PC-9 (cell line): ENCODE measurements at regions of chr7 and their contacts with region 1.

Region 1: GRCh38 chr7:44811086-44811485 is 14.6 kb downstream of the PPIA start:
- DNase-seq: peak in 1 of 2 experiments; percentile 84
- H3K4me3 ChIP-seq: no peak overlapping the region
- H3K27ac ChIP-seq: peak overlapping the region; percentile 2; the same call in 1 of the 2 replicates
- H3K4me1 ChIP-seq: peaks cover 16% of the 10 kb centered on the region
- H3K27me3 ChIP-seq: no peaks in the 10 kb centered on the region
- CTCF ChIP-seq: no peak

Region 2: GRCh38 chr7:44824894-44825526 is 13.9 kb after region 1 on chr7:
- CTCF ChIA-PET with region 1: no interaction called
- POLR2A ChIA-PET with region 1: interaction called, 19 read pairs
- intact Hi-C with region 1: no loop called
- DNase-seq: no peak
- H3K4me3 ChIP-seq: no peak overlapping the region
- H3K27ac ChIP-seq: no peak overlapping the region
- H3K4me1 ChIP-seq: no peaks in the 10 kb centered on the region
- H3K27me3 ChIP-seq: no peaks in the 10 kb centered on the region
- CTCF ChIP-seq: no peak

Region 3: GRCh38 chr7:44876393-44876792 is 65.3 kb after region 1 on chr7:
- CTCF ChIA-PET with region 1: no interaction called
- POLR2A ChIA-PET with region 1: no interaction called
- intact Hi-C with region 1: no loop called
- DNase-seq: no peak
- H3K4me3 ChIP-seq: no peak overlapping the region
- H3K27ac ChIP-seq: no peak overlapping the region
- H3K4me1 ChIP-seq: peaks cover 21% of the 10 kb centered on the region
- H3K27me3 ChIP-seq: no peaks in the 10 kb centered on the region
- CTCF ChIP-seq: no peak